Esophagus muscularis mucosa (tissue), 4 donors: ENCODE measurements at regions of chr6 and their contacts with region 1.

Region 1: GRCh38 chr6:97677626-97678025 is 394.6 kb upstream of the MMS22L start:
- DNase-seq: no peak
- H3K4me3 ChIP-seq: no peak overlapping the region
- H3K27ac ChIP-seq: no peak overlapping the region
- H3K4me1 ChIP-seq: no peaks in the 10 kb centered on the region
- H3K27me3 ChIP-seq: no peaks in the 10 kb centered on the region
- CTCF ChIP-seq: no peak
- EP300 ChIP-seq: no peak
- POLR2A ChIP-seq: no peak

Region 2: GRCh38 chr6:97594844-97595243 is 82.8 kb before region 1 on chr6:
- intact Hi-C with region 1: no loop called
- DNase-seq: no peak
- H3K4me3 ChIP-seq: no peak overlapping the region
- H3K27ac ChIP-seq: no peak overlapping the region
- H3K4me1 ChIP-seq: peaks cover 0 to 6% (median 0%) of the 10 kb centered on the region in 4 donors
- H3K27me3 ChIP-seq: no peaks in the 10 kb centered on the region
- CTCF ChIP-seq: no peak
- EP300 ChIP-seq: no peak
- POLR2A ChIP-seq: no peak

Region 3: DNA sequence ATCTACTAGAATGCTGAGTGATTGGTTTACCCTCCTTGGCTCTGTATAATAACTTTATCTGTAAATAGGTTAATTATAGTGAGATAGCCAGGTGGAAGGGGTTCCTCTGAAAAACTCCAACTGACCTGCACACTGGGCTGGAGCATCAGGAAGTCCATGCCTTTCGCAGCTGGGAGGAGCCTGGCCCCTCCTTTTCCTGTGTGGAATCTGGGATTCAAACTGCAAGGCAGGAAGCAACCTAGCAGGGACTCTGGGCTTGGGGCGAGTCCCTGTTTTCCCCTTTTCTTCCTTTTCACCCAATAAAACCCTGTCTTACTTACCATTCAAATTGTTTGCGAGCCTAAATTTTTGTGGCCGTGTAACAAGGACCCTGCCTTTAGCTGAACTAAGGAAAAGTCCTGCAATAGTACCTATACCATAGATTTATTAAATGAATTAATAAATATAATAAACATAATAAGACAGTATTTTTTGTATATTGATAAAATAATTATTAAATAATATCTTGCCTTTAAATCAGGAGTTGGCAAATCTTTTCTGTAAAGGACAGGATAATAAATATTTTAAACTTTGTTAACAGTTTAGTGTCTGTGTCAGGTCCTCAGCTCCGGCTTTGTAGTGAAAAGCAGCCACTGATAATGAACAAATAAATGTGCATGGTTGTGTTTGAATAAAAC is 11.6 kb after region 1 on chr6:
- intact Hi-C with region 1: loop called (anchors 1 kb)
- DNase-seq: no peak
- H3K4me3 ChIP-seq: no peak overlapping the region
- H3K27ac ChIP-seq: no peak overlapping the region
- H3K4me1 ChIP-seq: no peaks in the 10 kb centered on the region
- H3K27me3 ChIP-seq: no peaks in the 10 kb centered on the region
- CTCF ChIP-seq: no peak
- EP300 ChIP-seq: no peak
- POLR2A ChIP-seq: no peak